CD4-positive, alpha-beta memory T cell (primary cell): ENCODE measurements at regions of chr21 and their contacts with region 1.

Region 1: GRCh38 chr21:28992526-28993292 is at the start of gene LTN1:
- DNase-seq: peak; percentile 98 to 99 (median 99)
- H3K4me3 ChIP-seq: peak within 1 kb of the TSS; percentile 87 to 98
- H3K4me3 Mint-ChIP-seq: peak within 1 kb of the TSS; percentile 90 to 98 (median 96)
- H3K27ac ChIP-seq: peak within 1 kb of the TSS; percentile 82
- H3K27ac Mint-ChIP-seq: peak within 1 kb of the TSS; percentile 85 to 100 (median 99)
- H3K4me1 ChIP-seq: peaks cover 31% of the 10 kb centered on the region
- H3K4me1 Mint-ChIP-seq: peaks cover 24 to 54% (median 36%) of the 10 kb centered on the region in 4 donors
- H3K27me3 ChIP-seq: no peaks in the 10 kb centered on the region
- H3K27me3 Mint-ChIP-seq: no peaks in the 10 kb centered on the region
- total RNA-seq, gene LTN1: 34.6 to 39.5 TPM

Region 2: GRCh38 chr21:28877318-28877884 is 115.3 kb before region 1 on chr21:
- CTCF ChIA-PET with region 1: no interaction called
- POLR2A ChIA-PET with region 1: no interaction called
- intact Hi-C with region 1: no loop called
- DNase-seq: no peak
- H3K4me3 ChIP-seq: no peak overlapping the region
- H3K4me3 Mint-ChIP-seq: peak overlapping the region in 1 of 8 donors; percentile 27
- H3K27ac ChIP-seq: no peak overlapping the region
- H3K27ac Mint-ChIP-seq: peak overlapping the region in 4 of 7 donors; percentile 35 to 88 (median 64)
- H3K4me1 ChIP-seq: no peaks in the 10 kb centered on the region
- H3K4me1 Mint-ChIP-seq: peaks cover 0 to 4% (median 0%) of the 10 kb centered on the region in 4 donors
- H3K27me3 ChIP-seq: no peaks in the 10 kb centered on the region
- H3K27me3 Mint-ChIP-seq: no peaks in the 10 kb centered on the region

Region 3: DNA sequence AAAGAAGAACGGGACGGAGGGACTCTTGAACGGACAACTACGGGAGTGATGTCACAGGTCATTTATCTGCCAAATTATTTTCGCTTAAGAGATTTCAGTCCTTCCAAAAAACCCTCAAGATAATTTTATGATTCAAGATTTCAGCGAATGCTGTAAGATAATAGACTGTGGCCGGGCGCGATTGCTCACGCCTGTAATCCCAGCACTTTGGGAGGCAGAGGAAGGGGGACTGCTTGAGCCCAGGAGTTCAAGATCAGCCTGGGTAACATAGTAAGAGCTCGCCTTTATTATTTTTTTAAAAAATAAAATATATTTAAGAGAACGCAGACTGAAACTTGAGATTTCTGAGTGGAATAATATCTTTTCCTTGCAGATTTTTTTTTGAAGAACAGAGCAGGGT is 25.8 kb after region 1 on chr21:
- CTCF ChIA-PET with region 1: interaction called, 15 read pairs
- POLR2A ChIA-PET with region 1: interaction called, 107 read pairs
- intact Hi-C with region 1: loop called (anchors 1 kb)
- DNase-seq: no peak
- H3K4me3 ChIP-seq: peak overlapping the region; percentile 68 to 93
- H3K4me3 Mint-ChIP-seq: peak overlapping the region; percentile 82 to 94 (median 92)
- H3K27ac ChIP-seq: peak overlapping the region; percentile 92
- H3K27ac Mint-ChIP-seq: peak overlapping the region; percentile 78 to 99 (median 96)
- H3K4me1 ChIP-seq: peaks cover 39% of the 10 kb centered on the region
- H3K4me1 Mint-ChIP-seq: peaks cover 19 to 52% (median 38%) of the 10 kb centered on the region in 4 donors
- H3K27me3 ChIP-seq: no peaks in the 10 kb centered on the region
- H3K27me3 Mint-ChIP-seq: no peaks in the 10 kb centered on the region